Endothelial cell of umbilical vein (primary cell): ENCODE measurements at regions of chr14 and their contacts with region 1.

Region 1: GRCh38 chr14:93115069-93115820 is 480 bp downstream of the ITPK1 start:
- DNase-seq: peak; percentile 83
- H3K4me3 ChIP-seq: peak overlapping the region; percentile 43 to 62 (median 59)
- H3K27ac ChIP-seq: no peak overlapping the region
- H3K4me1 ChIP-seq: peaks cover 12% of the 10 kb centered on the region
- H3K27me3 ChIP-seq: no peaks in the 10 kb centered on the region
- CTCF ChIP-seq: no peak
- POLR2A ChIP-seq: no peak

Region 2: DNA sequence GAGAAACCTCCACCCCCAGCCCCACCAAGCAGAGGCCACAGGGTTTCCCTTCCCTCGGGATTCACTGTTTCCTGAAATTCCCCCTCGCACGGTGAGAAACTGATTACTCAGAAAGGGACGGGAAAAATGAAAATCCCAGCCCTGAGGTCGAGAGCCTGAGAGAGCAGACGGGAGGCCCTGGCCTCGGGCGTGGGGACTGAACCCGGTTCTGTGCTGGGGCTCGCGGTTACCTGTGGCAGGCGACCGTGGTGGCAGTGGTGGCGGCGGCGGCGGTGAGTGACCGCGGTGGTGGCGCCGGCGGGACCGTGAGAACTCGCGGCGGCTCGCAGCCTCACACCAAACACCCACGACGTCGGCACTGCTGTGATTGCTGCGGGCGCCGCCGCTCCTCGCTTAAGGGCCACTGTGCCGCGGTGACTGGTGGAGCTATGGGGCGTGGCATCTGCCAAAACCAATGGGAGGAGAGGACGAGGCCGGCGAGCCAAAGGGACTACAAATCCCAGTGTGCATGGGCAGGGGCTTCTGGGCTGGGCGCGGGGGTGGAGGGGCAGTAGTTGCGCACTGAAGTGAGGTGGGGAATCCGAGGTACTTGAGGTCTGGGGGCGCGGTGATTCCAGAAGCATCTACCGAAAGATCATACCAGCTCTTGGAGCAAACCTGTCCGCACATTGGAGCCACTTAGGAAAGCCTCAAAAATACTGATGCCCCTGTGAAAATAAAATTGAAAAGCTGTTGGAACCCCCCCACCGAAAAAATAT is 366.8 kb before region 1 on chr14 and contains the start of gene LGMN:
- CTCF ChIA-PET with region 1: no interaction called
- POLR2A ChIA-PET with region 1: no interaction called
- dilution Hi-C with region 1: no loop called
- intact Hi-C with region 1: loop called (anchors 1 kb)
- DNase-seq: peak; percentile 97
- H3K4me3 ChIP-seq: peak within 1 kb of the TSS; percentile 37 to 79 (median 66)
- H3K27ac ChIP-seq: peak within 1 kb of the TSS; percentile 59
- H3K4me1 ChIP-seq: peaks cover 7% of the 10 kb centered on the region
- H3K27me3 ChIP-seq: peaks cover 0 to 2% of the 10 kb centered on the region in 2 experiments
- CTCF ChIP-seq: no peak
- POLR2A ChIP-seq: peak; percentile 94
- total RNA-seq, gene LGMN: 56.7 and 62.6 TPM in 2 replicates

Region 3: DNA sequence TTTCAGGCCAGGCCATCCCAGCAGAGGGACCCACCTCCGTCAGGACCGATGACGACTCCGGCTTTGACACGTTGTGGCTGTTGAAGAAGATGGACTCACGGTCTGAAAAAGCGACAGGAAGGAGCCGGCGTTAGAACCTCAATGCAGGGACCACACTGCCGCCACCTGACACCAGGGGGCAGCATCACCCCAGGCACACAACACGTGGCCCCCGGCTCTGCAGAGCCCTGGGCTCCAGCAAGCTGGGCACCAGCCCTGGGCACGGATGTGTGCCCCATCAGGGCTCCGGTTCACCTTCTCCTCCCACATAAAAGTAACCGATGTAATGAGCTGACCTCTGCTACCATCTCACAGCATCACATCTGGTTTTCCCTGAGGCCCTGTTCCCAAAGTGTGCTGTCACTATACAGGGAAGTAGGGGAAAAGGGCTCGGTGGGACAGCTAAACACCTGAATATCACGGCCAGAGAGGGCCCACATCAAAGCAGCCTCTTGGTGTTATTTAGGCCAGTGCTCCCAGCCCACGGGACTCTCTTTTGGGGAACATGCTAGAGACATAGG is 163.3 kb before region 1 on chr14:
- CTCF ChIA-PET with region 1: interaction called, 38 read pairs
- POLR2A ChIA-PET with region 1: no interaction called
- dilution Hi-C with region 1: no loop called
- intact Hi-C with region 1: loop called (anchors 1 kb)
- DNase-seq: peak; percentile 70
- H3K4me3 ChIP-seq: no peak overlapping the region
- H3K27ac ChIP-seq: no peak overlapping the region
- H3K4me1 ChIP-seq: no peaks in the 10 kb centered on the region
- H3K27me3 ChIP-seq: no peaks in the 10 kb centered on the region
- CTCF ChIP-seq: peak; percentile 86 to 96
- POLR2A ChIP-seq: no peak

Region 4: GRCh38 chr14:93049867-93050331 is 65.3 kb before region 1 on chr14:
- CTCF ChIA-PET with region 1: interaction called, 12 read pairs
- POLR2A ChIA-PET with region 1: no interaction called
- dilution Hi-C with region 1: no loop called
- intact Hi-C with region 1: loop called (anchors 1 kb)
- DNase-seq: peak; percentile 82
- H3K4me3 ChIP-seq: no peak overlapping the region
- H3K27ac ChIP-seq: no peak overlapping the region
- H3K4me1 ChIP-seq: peaks cover 29% of the 10 kb centered on the region
- H3K27me3 ChIP-seq: no peaks in the 10 kb centered on the region
- CTCF ChIP-seq: no peak
- POLR2A ChIP-seq: no peak

Region 5: GRCh38 chr14:93160353-93160801 is 45.1 kb after region 1 on chr14:
- CTCF ChIA-PET with region 1: interaction called, 11 read pairs
- POLR2A ChIA-PET with region 1: no interaction called
- dilution Hi-C with region 1: no loop called
- intact Hi-C with region 1: no loop called
- DNase-seq: no peak
- H3K4me3 ChIP-seq: no peak overlapping the region
- H3K27ac ChIP-seq: no peak overlapping the region
- H3K4me1 ChIP-seq: no peaks in the 10 kb centered on the region
- H3K27me3 ChIP-seq: no peaks in the 10 kb centered on the region
- CTCF ChIP-seq: peak; percentile 13 to 28
- POLR2A ChIP-seq: no peak

Region 6: DNA sequence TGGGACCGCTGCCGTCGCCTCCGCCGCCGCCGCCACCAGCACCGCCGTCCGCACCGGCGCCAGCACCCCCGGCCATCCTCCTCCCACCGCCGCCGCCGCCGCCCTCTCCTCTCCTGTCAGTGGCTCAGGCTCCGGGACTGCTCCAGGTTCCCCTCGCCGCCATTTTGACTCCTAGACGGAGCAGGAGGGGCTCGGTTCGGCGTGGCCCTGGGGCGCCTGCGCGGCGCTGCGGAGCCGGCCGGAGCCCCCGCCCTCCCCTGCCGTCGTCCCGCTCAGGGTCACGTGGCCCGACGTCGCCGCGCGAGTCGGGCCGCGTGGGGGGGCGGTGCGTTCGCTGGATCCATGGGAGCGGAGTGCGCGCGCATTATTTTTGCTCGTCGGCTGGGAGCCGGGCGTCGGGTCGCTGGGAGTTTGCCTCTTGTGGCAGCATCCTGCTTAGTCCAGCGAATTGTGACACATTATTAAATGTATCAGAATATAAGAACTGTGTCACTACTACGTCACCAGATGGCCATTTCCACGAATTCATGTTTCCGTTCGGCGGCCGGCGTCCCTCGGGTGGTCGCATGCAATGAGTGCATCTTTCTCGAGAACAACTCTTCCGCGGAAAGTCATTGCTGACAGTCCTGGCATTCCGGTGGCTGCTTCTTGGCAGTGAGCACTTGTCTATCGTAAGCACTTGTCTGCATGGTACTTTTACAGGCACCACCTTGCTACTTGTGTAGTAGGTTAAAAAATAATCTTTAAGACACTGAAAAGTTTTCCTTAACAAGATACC is 217.8 kb after region 1 on chr14 and contains the start of gene BTBD7:
- CTCF ChIA-PET with region 1: no interaction called
- POLR2A ChIA-PET with region 1: no interaction called
- dilution Hi-C with region 1: no loop called
- intact Hi-C with region 1: loop called (anchors 10 kb)
- DNase-seq: peak; percentile 97
- H3K4me3 ChIP-seq: peak within 1 kb of the TSS; percentile 82 to 95 (median 94)
- H3K27ac ChIP-seq: peak within 1 kb of the TSS; percentile 82
- H3K4me1 ChIP-seq: peaks cover 26% of the 10 kb centered on the region
- H3K27me3 ChIP-seq: no peaks in the 10 kb centered on the region
- CTCF ChIP-seq: peak in 1 of 2 donors; percentile 19
- POLR2A ChIP-seq: peak; percentile 63
- total RNA-seq, gene BTBD7: 47.8 and 50.2 TPM in 2 replicates